ENCODE measurements at regions of chr11 and their contacts with region 1.

Region 1: GRCh38 chr11:125141686-125142535 is 22.6 kb upstream of the PKNOX2 start:
- DNase-seq: no peak
- H3K4me3 ChIP-seq: no peak overlapping the region
- H3K27me3 ChIP-seq: peaks cover 11% of the 10 kb centered on the region
- CTCF ChIP-seq: peak; percentile 97

Region 2: GRCh38 chr11:124961972-124962609 is 179.8 kb before region 1 on chr11:
- CTCF ChIA-PET with region 1: interaction called, 38 read pairs
- POLR2A ChIA-PET with region 1: no interaction called
- DNase-seq: no peak
- H3K4me3 ChIP-seq: no peak overlapping the region
- H3K27me3 ChIP-seq: no peaks in the 10 kb centered on the region
- CTCF ChIP-seq: peak; percentile 71

Region 3: DNA sequence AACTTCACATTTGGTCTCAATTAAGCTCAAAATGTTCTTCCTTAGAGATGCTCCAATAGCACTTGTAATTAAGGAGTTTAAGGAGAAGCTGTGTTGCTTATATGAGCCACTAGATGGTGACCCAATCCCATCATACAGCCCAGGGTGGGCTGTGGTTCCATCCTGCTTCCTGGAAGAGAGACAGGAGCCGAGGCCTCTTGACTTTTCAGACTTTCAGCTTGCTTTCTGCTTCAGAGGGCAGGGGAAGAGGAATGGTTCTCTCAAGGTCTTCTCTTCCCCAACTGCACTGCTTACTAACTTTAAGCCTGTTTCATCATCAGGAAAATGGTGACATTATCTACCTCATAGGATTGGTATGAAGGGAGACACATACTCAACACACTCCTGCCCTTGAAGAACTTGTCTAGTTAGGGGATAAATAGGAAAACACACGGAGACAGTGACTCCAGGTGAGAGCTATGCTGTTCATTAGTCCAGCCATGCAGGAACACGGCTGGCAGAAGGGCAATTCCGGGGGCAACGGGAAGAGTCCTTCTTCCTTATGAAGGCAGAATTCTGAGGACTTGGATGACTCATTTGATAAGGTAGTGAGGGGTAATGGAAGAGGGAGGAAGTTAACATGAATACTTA is 50.5 kb before region 1 on chr11:
- CTCF ChIA-PET with region 1: interaction called, 30 read pairs
- POLR2A ChIA-PET with region 1: no interaction called
- DNase-seq: no peak
- H3K4me3 ChIP-seq: no peak overlapping the region
- H3K27me3 ChIP-seq: no peaks in the 10 kb centered on the region
- CTCF ChIP-seq: peak; percentile 62

Region 4: GRCh38 chr11:125123947-125124617 is 17.8 kb before region 1 on chr11:
- CTCF ChIA-PET with region 1: interaction called, 19 read pairs
- POLR2A ChIA-PET with region 1: no interaction called
- DNase-seq: no peak
- H3K4me3 ChIP-seq: no peak overlapping the region
- H3K27me3 ChIP-seq: peaks cover 5% of the 10 kb centered on the region
- CTCF ChIP-seq: peak; percentile 46

Region 5: GRCh38 chr11:125404776-125405435 is 263.0 kb after region 1 on chr11:
- CTCF ChIA-PET with region 1: interaction called, 17 read pairs
- POLR2A ChIA-PET with region 1: no interaction called
- DNase-seq: no peak
- H3K4me3 ChIP-seq: no peak overlapping the region
- H3K27me3 ChIP-seq: peaks cover 27% of the 10 kb centered on the region
- CTCF ChIP-seq: peak; percentile 98

Region 6: DNA sequence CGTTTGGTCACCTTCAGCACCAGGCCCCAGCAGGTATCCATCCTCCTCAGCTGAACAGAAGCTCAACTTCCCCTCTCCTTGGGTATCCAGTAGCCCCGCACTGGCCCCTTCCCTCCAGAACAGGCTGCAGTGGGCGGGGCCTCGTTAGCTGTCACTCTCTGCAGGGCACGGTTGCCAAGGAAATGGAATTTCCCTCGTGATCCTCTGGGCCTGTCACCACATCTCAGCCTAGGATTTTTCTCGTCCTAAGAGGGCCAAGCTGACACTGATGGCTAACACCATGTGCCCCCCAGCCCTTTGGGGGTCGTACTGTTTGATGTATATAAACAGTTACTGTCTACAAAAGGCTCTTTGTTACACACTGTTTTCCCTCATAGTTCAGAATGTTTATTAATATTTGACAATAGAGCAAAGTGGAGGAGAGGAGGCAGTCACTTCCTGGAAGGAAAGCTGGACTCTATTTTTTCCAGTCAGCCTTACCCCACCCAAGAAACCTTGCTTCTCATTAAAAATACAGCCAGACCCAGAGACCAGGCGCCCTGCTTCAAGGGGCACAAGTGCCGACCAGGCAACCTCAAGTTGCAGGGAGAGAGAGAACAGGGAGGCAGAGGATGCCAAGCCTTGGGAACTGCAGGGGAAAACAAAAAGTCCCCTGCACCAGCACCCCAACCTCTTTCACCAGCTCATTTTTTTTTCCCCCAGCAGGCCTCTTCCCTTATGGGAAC is 309.7 kb after region 1 on chr11:
- CTCF ChIA-PET with region 1: no interaction called
- POLR2A ChIA-PET with region 1: no interaction called
- DNase-seq: no peak
- H3K4me3 ChIP-seq: no peak overlapping the region
- H3K27me3 ChIP-seq: no peaks in the 10 kb centered on the region
- CTCF ChIP-seq: no peak